ENCODE measurements at regions of chr18 and their contacts with region 1.

Region 1: DNA sequence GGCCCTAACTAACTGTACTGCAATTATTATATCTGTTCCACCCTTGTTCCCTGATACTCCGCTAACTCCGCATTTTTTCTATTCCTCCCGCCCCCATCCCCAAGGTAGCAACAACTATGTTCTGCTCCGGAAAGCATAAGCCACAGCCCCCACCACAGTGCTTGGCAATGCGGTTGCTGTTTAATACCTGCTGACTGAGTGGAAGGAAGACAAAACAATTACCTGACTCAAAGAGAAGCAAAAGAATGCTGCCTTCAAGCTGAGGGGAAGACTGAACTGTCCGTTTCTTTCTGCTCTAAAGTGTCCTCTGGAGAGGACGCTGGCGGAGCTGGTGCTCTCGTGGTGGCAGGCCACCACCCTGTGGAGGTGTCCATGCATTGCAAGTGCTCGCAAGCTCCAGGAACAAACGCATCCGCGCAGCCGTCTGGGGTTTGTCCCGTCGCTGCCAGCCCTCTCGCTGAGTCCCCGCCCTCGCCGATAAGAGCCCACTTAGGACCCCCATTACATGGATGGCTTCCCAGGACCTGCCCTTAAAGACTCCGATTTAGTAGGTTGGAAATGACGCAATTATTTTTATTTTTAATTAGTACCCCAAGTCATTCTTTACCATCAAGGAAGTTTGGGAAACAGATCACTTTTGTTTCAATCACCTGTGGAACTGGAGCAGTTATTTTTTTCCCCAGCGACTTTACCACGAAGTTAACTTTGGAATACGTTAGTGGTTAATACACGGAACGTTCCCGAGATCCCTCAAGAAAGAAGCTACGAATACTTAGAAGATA is 1.6 kb upstream of the MYL12A start:
- DNase-seq: peak; percentile 89
- ATAC-seq: peak; percentile 52
- H3K4me3 Mint-ChIP-seq: peak overlapping the region; percentile 82
- H3K27ac Mint-ChIP-seq: peak overlapping the region; percentile 100
- H3K4me1 Mint-ChIP-seq: peaks cover 23% of the 10 kb centered on the region
- H3K27me3 Mint-ChIP-seq: no peaks in the 10 kb centered on the region

Region 2: DNA sequence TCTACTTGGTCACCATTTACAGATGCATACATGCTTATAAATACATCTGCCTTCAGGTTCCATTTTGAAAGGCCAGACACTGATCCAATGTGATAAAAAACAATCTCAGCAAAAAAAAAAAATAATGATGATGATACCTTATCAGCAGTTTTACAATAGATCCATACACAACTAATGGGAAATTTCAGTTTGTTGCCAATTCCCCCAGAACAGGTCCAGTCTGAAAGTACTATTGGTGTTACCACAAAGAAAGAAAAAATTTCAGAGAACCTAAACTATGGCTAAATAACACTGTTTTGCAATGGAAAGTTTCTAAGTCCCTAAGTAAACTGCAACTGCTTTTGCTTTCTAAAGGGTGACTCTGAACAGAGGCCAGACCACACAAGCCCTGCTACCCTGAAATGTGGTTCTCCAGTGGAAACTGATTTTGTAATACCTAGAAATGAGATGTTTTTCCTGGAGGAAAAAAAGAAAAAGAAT is 287.2 kb before region 1 on chr18:
- CTCF ChIA-PET with region 1: interaction called, 14 read pairs
- POLR2A ChIA-PET with region 1: interaction called, 8 read pairs
- DNase-seq: peak; percentile 78
- ATAC-seq: peak; percentile 56
- H3K4me3 Mint-ChIP-seq: peak overlapping the region; percentile 72
- H3K27ac Mint-ChIP-seq: peak overlapping the region; percentile 95
- H3K4me1 Mint-ChIP-seq: peaks cover 89% of the 10 kb centered on the region
- H3K27me3 Mint-ChIP-seq: no peaks in the 10 kb centered on the region

Region 3: DNA sequence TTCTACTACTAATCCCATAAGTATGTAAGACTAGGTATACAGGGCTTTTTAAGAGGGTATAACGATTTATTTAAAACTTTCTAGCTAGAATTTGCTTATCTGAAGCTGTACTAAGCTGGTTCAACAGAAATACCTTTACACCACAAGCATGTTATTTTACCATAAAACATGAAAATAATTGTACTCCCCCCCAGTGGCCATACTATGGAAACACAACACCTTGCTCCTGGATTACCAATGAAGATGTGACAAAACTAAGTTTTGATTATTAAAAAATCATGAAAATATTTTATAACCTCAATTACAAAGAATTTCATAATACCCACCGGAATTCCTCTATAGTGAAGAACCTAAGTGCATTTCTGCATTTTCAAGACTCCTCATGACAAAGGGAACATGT is 260.4 kb before region 1 on chr18:
- CTCF ChIA-PET with region 1: interaction called, 24 read pairs
- POLR2A ChIA-PET with region 1: interaction called, 15 read pairs
- DNase-seq: no peak
- ATAC-seq: peak; percentile 36
- H3K4me3 Mint-ChIP-seq: no peak overlapping the region
- H3K27ac Mint-ChIP-seq: no peak overlapping the region
- H3K4me1 Mint-ChIP-seq: peaks cover 66% of the 10 kb centered on the region
- H3K27me3 Mint-ChIP-seq: no peaks in the 10 kb centered on the region

Region 4: DNA sequence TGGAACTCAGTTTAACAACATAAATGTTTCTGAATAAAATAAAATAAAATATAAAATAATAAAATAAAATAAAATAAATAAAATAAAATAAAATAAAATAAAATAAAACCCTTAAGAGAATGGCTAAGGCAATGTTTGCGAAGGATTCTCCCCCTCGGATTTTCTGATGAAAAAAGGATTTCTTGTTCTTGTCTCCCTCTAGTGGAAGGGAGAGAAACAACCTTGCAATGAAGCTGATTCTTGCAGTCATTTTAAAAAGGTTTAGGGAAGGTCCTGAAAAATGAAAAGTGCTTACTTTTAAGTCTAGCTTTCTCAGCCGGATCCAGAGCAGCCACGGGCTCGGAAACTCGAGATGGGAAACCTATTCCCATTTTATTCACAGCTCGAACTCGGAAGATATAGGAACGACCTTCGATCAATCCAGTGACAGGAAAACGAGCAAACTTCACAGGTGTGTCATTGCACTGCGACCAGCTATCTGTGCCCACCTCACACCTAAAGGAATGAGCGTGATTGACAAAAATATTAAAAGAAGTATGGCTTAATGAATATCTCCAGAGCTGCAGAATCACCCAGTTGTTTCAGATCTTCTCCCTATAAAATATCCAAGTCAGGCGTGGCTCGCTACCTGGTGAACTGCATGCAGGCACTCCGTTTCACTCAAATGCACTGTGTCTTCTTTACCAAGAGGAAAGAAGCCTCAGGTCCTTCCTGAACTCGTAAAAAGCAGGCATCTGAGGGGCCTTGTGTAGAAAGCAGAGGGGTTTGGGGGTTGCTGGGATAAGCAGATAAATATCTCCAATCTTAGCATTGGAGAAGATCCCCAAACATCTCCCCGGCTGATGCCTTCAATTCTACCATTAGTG is 94.4 kb before region 1 on chr18:
- CTCF ChIA-PET with region 1: interaction called, 52 read pairs
- POLR2A ChIA-PET with region 1: no interaction called
- DNase-seq: no peak
- ATAC-seq: no peak
- H3K4me3 Mint-ChIP-seq: no peak overlapping the region
- H3K27ac Mint-ChIP-seq: no peak overlapping the region
- H3K4me1 Mint-ChIP-seq: no peaks in the 10 kb centered on the region
- H3K27me3 Mint-ChIP-seq: no peaks in the 10 kb centered on the region

Region 5: GRCh38 chr18:3447895-3448837 is 202.1 kb after region 1 on chr18:
- CTCF ChIA-PET with region 1: interaction called, 5 read pairs
- POLR2A ChIA-PET with region 1: interaction called, 10 read pairs
- DNase-seq: peak; percentile 90
- ATAC-seq: peak; percentile 72
- H3K4me3 Mint-ChIP-seq: peak overlapping the region; percentile 95
- H3K27ac Mint-ChIP-seq: peak overlapping the region; percentile 93
- H3K4me1 Mint-ChIP-seq: peaks cover 25% of the 10 kb centered on the region
- H3K27me3 Mint-ChIP-seq: peaks cover under 1% of the 10 kb centered on the region